Naive thymus-derived CD4-positive, alpha-beta T cell (primary cell): ENCODE measurements at regions of chr1 and their contacts with region 1.

Region 1: GRCh38 chr1:206734499-206735142 is 36.0 kb upstream of the IL19 start:
- DNase-seq: peak; percentile 63 to 87 (median 76)
- ATAC-seq: peak; percentile 80
- H3K4me3 ChIP-seq: no peak overlapping the region
- H3K4me3 Mint-ChIP-seq: peak overlapping the region in 4 of 10 donors; percentile 7 to 54 (median 26)
- H3K27ac ChIP-seq: no peak overlapping the region
- H3K27ac Mint-ChIP-seq: peak overlapping the region; percentile 53 to 95 (median 87)
- H3K4me1 ChIP-seq: peaks cover 49 to 50% of the 10 kb centered on the region in 2 donors
- H3K4me1 Mint-ChIP-seq: peaks cover 40 to 60% (median 56%) of the 10 kb centered on the region in 7 donors
- H3K27me3 ChIP-seq: no peaks in the 10 kb centered on the region
- H3K27me3 Mint-ChIP-seq: no peaks in the 10 kb centered on the region

Region 2: GRCh38 chr1:206469933-206470691 is 264.5 kb before region 1 on chr1 and contains the start of gene IKBKE:
- CTCF ChIA-PET with region 1: no interaction called
- POLR2A ChIA-PET with region 1: no interaction called
- intact Hi-C with region 1: no loop called
- DNase-seq: peak in 8 of 9 donors; percentile 37 to 58 (median 44)
- ATAC-seq: peak; percentile 74
- H3K4me3 ChIP-seq: peak within 1 kb of the TSS; percentile 98
- H3K4me3 Mint-ChIP-seq: peak within 1 kb of the TSS; percentile 88 to 95 (median 93)
- H3K27ac ChIP-seq: peak within 1 kb of the TSS; percentile 78
- H3K27ac Mint-ChIP-seq: peak within 1 kb of the TSS; percentile 75 to 97 (median 86)
- H3K4me1 ChIP-seq: peaks cover 64 to 66% of the 10 kb centered on the region in 2 donors
- H3K4me1 Mint-ChIP-seq: peaks cover 55 to 86% (median 78%) of the 10 kb centered on the region in 7 donors
- H3K27me3 ChIP-seq: no peaks in the 10 kb centered on the region
- H3K27me3 Mint-ChIP-seq: no peaks in the 10 kb centered on the region
- total RNA-seq, gene IKBKE: 50.1 to 177 (median 79.1) TPM

Region 3: DNA sequence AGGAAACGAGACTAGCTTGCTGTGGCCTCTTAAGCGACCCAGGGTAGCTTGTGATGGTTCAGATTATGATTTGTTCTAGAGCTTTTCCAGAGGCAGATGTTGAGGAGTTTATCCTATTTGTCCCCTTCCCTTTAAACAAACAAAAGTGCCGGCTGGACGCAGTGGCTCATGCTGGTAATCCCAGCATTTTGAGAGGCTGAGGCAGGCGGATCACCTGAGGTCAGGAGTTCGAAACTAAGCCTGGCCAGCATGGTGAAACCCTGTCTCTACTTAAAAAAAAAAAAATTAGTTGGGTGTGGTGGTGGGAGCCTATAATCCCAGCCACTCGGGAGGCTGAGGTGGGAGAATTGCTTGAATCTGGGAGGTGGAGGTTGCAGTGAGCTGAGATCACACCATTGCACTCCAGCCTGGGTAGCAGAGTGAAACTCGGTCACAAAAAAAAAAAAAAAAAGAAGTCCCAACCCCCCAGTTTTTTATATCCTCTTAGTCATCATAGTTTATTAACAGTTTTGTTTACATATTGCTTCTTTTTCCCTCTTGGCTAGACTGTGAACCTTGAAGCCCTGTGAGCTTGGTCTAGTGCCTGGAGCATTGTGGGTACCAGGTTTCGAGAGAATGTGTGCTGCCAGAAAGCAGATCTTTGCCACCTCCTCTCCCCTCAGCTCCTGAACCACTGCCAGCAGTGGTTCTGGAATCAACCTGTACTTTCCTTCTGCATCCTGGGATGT is 20.1 kb before region 1 on chr1:
- CTCF ChIA-PET with region 1: no interaction called
- POLR2A ChIA-PET with region 1: no interaction called
- intact Hi-C with region 1: no loop called
- DNase-seq: no peak
- ATAC-seq: peak; percentile 58
- H3K4me3 ChIP-seq: no peak overlapping the region
- H3K4me3 Mint-ChIP-seq: peak overlapping the region in 8 of 10 donors; percentile 5 to 72 (median 44)
- H3K27ac ChIP-seq: no peak overlapping the region
- H3K27ac Mint-ChIP-seq: peak overlapping the region in 7 of 9 donors; percentile 20 to 89 (median 73)
- H3K4me1 ChIP-seq: peaks cover 30 to 59% of the 10 kb centered on the region in 2 donors
- H3K4me1 Mint-ChIP-seq: peaks cover 71 to 89% (median 82%) of the 10 kb centered on the region in 7 donors
- H3K27me3 ChIP-seq: no peaks in the 10 kb centered on the region
- H3K27me3 Mint-ChIP-seq: no peaks in the 10 kb centered on the region

Region 4: DNA sequence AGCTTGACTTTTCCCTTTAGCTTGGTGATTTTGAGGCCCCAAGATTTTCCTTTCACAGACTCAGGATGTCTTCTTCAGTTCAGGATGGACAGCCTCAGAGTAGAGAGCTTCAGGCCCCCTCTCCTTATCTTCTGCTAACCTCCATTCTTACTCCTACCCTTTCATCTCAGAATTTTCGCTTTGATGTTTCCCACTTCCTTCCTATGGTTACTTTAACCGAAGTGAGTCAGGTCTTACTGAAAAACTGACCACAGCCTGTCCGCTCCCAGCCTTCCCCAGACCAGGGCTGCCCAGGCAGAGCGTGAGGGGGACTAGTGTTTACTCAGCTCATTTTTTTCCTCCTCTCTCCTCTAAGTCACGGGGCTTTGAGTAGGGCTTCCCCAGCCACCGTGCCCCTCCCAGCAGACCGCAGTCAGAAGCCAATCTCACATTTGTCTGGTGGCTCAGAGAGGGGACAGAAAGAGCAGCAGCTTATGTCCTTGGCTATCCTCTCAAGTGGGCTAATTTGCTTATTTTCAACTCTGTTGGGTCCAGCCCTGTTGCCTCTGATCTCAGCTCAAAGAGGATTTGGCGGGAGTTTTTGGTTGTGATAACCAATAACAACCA is 31.7 kb after region 1 on chr1:
- CTCF ChIA-PET with region 1: interaction called, 40 read pairs
- POLR2A ChIA-PET with region 1: interaction called, 8 read pairs
- intact Hi-C with region 1: loop called (anchors 1 to 2 kb)
- DNase-seq: peak; percentile 43 to 76 (median 71)
- ATAC-seq: peak; percentile 91
- H3K4me3 ChIP-seq: peak overlapping the region; percentile 0
- H3K4me3 Mint-ChIP-seq: peak overlapping the region; percentile 52 to 85 (median 80)
- H3K27ac ChIP-seq: no peak overlapping the region
- H3K27ac Mint-ChIP-seq: peak overlapping the region; percentile 66 to 95 (median 76)
- H3K4me1 ChIP-seq: peaks cover 54 to 65% of the 10 kb centered on the region in 2 donors
- H3K4me1 Mint-ChIP-seq: peaks cover 48 to 80% (median 70%) of the 10 kb centered on the region in 7 donors
- H3K27me3 ChIP-seq: no peaks in the 10 kb centered on the region
- H3K27me3 Mint-ChIP-seq: peaks cover 0 to 44% (median 0%) of the 10 kb centered on the region in 5 donors

Region 5: GRCh38 chr1:206797534-206798383 is 63.1 kb after region 1 on chr1:
- CTCF ChIA-PET with region 1: interaction called, 329 read pairs
- POLR2A ChIA-PET with region 1: interaction called, 148 read pairs
- intact Hi-C with region 1: no loop called
- DNase-seq: peak in 2 of 9 donors; percentile 17 to 26
- ATAC-seq: peak; percentile 35
- H3K4me3 ChIP-seq: no peak overlapping the region
- H3K4me3 Mint-ChIP-seq: no peak overlapping the region
- H3K27ac ChIP-seq: no peak overlapping the region
- H3K27ac Mint-ChIP-seq: peak overlapping the region in 3 of 9 donors; percentile 50 to 70 (median 63)
- H3K4me1 ChIP-seq: peaks cover 13 to 23% of the 10 kb centered on the region in 2 donors
- H3K4me1 Mint-ChIP-seq: peaks cover 24 to 66% (median 51%) of the 10 kb centered on the region in 7 donors
- H3K27me3 ChIP-seq: no peaks in the 10 kb centered on the region
- H3K27me3 Mint-ChIP-seq: peaks cover 0 to 49% (median 0%) of the 10 kb centered on the region in 5 donors

Region 6: DNA sequence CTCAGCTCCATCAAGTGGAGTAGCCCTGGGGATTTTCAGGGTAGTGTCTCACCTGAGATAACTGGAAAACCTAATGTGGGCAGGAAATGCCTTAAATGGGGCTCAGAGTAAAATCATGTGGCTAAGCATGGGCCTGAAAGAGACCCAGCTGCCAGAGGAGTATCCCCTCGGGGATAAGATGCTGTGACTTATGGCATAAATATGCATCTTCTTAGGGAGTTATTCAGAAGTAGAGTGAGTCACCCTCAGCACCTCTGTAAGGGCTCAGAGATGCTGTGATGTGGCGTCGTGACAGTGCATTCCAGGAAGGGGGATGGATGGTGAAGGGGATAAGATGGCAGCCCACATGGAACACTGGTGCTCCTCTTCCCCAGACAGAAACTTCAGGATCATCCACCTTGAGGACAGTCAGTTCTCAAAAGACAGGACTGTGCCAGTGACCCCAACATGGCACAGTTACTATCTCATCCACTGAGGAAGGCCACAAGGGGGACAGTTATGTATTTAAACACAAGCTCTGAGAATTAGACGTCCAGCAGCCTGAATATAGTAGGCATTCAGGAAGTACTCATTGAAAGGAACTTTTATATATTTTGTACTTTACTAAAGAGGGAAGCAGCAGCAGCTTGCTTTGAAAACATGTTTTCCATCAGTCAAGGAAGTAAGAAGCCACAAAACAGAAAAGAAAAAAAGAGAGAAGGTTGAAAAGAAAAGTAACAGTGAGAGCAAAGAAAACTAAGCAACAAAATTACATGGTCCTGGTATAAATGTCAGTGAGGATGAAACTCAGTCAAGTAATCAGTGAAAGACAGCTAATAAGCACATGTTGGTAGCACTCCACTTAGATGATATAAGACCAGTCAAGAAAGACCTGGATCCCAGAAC is 170.9 kb after region 1 on chr1:
- CTCF ChIA-PET with region 1: interaction called, 26 read pairs
- POLR2A ChIA-PET with region 1: interaction called, 60 read pairs
- intact Hi-C with region 1: no loop called
- DNase-seq: peak in 7 of 9 donors; percentile 38 to 64 (median 59)
- ATAC-seq: peak; percentile 32
- H3K4me3 ChIP-seq: peak overlapping the region; percentile 17
- H3K4me3 Mint-ChIP-seq: peak overlapping the region; percentile 60 to 88 (median 78)
- H3K27ac ChIP-seq: peak overlapping the region; percentile 69
- H3K27ac Mint-ChIP-seq: peak overlapping the region; percentile 79 to 98 (median 93)
- H3K4me1 ChIP-seq: peaks cover 28 to 72% of the 10 kb centered on the region in 2 donors
- H3K4me1 Mint-ChIP-seq: peaks cover 52 to 94% (median 86%) of the 10 kb centered on the region in 7 donors
- H3K27me3 ChIP-seq: no peaks in the 10 kb centered on the region
- H3K27me3 Mint-ChIP-seq: peaks cover 0 to 6% (median 0%) of the 10 kb centered on the region in 5 donors

Region 7: DNA sequence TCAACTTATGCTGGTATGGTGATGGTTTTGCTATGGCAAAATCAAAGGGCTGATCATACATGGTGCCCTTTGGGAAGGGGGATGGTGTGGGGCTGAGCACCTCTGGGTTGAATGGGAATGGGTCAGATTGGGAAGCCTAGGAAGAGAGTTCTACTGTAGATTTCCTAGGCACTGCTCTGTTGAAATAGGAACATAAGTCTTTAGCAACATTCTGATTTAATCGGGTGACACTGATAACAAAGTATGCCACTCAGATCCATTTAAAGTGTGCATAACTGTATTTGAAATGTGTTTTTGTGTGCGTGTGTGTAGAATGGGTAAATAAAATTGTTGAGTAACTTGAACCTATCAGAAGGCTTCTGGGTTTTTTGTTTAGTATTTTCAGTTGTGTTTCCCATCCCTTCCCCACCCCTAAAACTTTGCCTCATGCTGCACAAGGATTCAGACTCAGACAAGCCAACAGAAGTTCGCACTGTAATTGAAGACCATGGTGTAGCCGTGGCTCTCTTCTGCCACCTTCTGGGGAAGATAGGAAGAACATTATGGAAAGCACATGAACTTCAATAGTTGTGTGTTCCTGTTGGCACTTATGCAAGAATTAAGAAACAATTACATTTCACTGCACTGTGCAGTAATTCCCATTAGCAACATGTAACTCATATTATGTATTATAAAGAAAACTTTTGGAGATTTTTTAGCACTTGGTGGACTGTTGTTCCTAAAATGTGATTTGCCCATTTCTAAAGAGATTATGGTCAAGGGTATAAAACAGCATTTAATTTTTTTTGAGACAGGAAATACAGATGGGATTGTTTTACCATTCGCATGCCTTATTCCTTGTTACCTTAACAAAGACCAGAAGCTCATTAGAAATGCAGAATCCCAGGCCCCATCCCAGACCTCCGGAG is 343.1 kb after region 1 on chr1:
- CTCF ChIA-PET with region 1: no interaction called
- POLR2A ChIA-PET with region 1: no interaction called
- intact Hi-C with region 1: loop called in 1 of 2 experiments (anchors 5 kb)
- DNase-seq: peak; percentile 21 to 85 (median 78)
- ATAC-seq: peak; percentile 98
- H3K4me3 ChIP-seq: no peak overlapping the region
- H3K4me3 Mint-ChIP-seq: no peak overlapping the region
- H3K27ac ChIP-seq: no peak overlapping the region
- H3K27ac Mint-ChIP-seq: peak overlapping the region in 3 of 9 donors; percentile 5 to 63 (median 28)
- H3K4me1 ChIP-seq: no peaks in the 10 kb centered on the region
- H3K4me1 Mint-ChIP-seq: peaks cover 0 to 14% (median 5%) of the 10 kb centered on the region in 7 donors
- H3K27me3 ChIP-seq: no peaks in the 10 kb centered on the region
- H3K27me3 Mint-ChIP-seq: peaks cover 0 to 52% (median 0%) of the 10 kb centered on the region in 5 donors